ENCODE measurements at regions of chrX and their contacts with region 1.

Region 1: GRCh38 chrX:102863735-102864134 is 73.3 kb upstream of the RAB40AL start:
- DNase-seq: peak; percentile 74 to 79 (median 75)
- H3K4me3 ChIP-seq: no peak overlapping the region
- H3K4me3 Mint-ChIP-seq: no peak overlapping the region
- H3K27ac ChIP-seq: no peak overlapping the region
- H3K27ac Mint-ChIP-seq: no peak overlapping the region
- H3K4me1 ChIP-seq: no peaks in the 10 kb centered on the region
- H3K4me1 Mint-ChIP-seq: no peaks in the 10 kb centered on the region
- H3K27me3 ChIP-seq: no peaks in the 10 kb centered on the region
- H3K27me3 Mint-ChIP-seq: no peaks in the 10 kb centered on the region

Region 2: GRCh38 chrX:102067966-102068708 is 795.6 kb before region 1 on chrX:
- CTCF ChIA-PET with region 1: no interaction called
- POLR2A ChIA-PET with region 1: no interaction called
- intact Hi-C with region 1: loop called (anchors 1 kb)
- DNase-seq: peak in 4 of 5 donors; percentile 12 to 24 (median 22)
- H3K4me3 ChIP-seq: no peak overlapping the region
- H3K4me3 Mint-ChIP-seq: no peak overlapping the region
- H3K27ac ChIP-seq: no peak overlapping the region
- H3K27ac Mint-ChIP-seq: no peak overlapping the region
- H3K4me1 ChIP-seq: no peaks in the 10 kb centered on the region
- H3K4me1 Mint-ChIP-seq: no peaks in the 10 kb centered on the region
- H3K27me3 ChIP-seq: no peaks in the 10 kb centered on the region
- H3K27me3 Mint-ChIP-seq: peaks cover 2 to 5% of the 10 kb centered on the region in 2 donors

Region 3: DNA sequence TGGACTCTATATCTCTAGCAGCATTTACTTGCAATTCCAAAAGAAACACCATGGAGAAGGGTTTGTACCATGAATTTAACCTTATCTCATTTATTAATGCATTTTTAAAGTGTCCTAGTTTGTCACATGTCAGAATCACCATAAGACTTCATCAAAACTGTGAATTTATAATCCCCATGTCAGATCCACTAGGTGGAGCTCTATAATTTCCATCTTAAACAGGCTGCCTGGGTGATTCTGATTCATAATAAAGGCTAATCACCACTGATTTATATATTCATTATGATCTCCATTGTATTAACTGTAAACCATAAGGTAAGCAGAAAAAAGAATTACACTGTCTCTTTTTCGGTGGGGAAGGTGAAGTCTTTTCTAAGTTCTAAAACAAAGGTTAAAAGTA is 734.3 kb before region 1 on chrX:
- CTCF ChIA-PET with region 1: no interaction called
- POLR2A ChIA-PET with region 1: no interaction called
- intact Hi-C with region 1: loop called (anchors 1 kb)
- DNase-seq: peak in 2 of 5 donors; percentile 6 to 9
- H3K4me3 ChIP-seq: no peak overlapping the region
- H3K4me3 Mint-ChIP-seq: no peak overlapping the region
- H3K27ac ChIP-seq: no peak overlapping the region
- H3K27ac Mint-ChIP-seq: no peak overlapping the region
- H3K4me1 ChIP-seq: no peaks in the 10 kb centered on the region
- H3K4me1 Mint-ChIP-seq: peaks cover 4 to 5% (median 5%) of the 10 kb centered on the region in 4 donors
- H3K27me3 ChIP-seq: peaks cover 3% of the 10 kb centered on the region
- H3K27me3 Mint-ChIP-seq: peaks cover 22 to 34% of the 10 kb centered on the region in 2 donors

Region 4: DNA sequence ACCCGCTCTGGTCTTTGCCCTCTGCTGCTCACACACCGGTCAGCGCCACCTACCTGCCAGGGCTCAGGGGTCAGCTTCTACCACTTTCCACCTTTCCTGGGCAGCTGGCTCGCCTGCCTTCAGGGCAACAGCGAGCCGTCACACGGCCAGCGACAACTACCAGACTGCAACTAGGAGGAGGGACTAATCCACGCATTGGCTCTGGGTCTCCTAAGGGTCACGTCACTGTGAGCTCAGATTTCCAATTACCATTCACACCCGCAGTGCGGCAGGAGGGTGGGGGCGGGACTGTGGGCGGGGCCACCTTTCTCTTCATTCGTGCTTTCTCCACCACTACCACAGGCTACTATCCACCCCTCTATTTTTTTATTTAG is 707.9 kb before region 1 on chrX and contains the start of gene BEX5:
- CTCF ChIA-PET with region 1: no interaction called
- POLR2A ChIA-PET with region 1: no interaction called
- intact Hi-C with region 1: loop called (anchors 1 kb)
- DNase-seq: peak; percentile 60 to 83 (median 65)
- H3K4me3 ChIP-seq: peak within 1 kb of the TSS; percentile 57 to 74
- H3K4me3 Mint-ChIP-seq: peak within 1 kb of the TSS; percentile 96 to 100 (median 98)
- H3K27ac ChIP-seq: peak within 1 kb of the TSS; percentile 77
- H3K27ac Mint-ChIP-seq: peak within 1 kb of the TSS; percentile 98 to 100 (median 99)
- H3K4me1 ChIP-seq: peaks cover 8% of the 10 kb centered on the region
- H3K4me1 Mint-ChIP-seq: peaks cover 0 to 14% (median 10%) of the 10 kb centered on the region in 4 donors
- H3K27me3 ChIP-seq: no peaks in the 10 kb centered on the region
- H3K27me3 Mint-ChIP-seq: no peaks in the 10 kb centered on the region
- total RNA-seq, gene BEX5: 5.9 to 7.4 TPM

Measured in CD4-positive, alpha-beta memory T cell (primary cell).